Heart left ventricle (tissue), 16 donors: ENCODE measurements at regions of chr12 and their contacts with region 1.

Region 1: DNA sequence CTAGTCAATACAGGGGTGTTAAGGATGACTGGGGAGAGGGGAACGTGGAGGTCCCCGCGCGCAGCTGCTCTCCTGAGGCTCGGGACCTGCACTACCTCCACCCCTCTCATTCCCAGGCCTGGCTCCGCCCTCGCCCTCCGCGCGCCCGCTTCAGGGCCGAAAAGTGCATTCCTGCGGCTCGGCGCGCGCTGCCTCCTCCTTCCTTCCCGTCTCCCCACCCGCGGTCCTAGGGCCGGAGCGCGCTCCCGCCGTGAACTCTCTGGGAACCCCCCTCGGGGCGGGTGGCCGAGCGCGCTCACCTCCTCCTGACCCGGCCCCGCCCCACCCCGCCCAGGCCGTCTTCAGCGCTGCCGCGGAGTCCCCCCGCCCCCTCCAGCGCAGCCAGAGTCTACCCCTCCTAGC is 11.2 kb downstream of the RARG start:
- DNase-seq: peak; percentile 91 to 96 (median 95)
- ATAC-seq: peak; percentile 85 to 92 (median 88)
- H3K4me3 ChIP-seq: peak overlapping the region; percentile 57 to 95 (median 74)
- H3K27ac ChIP-seq: peak overlapping the region; percentile 96 to 100 (median 100)
- H3K4me1 ChIP-seq: peaks cover 6 to 83% (median 57%) of the 10 kb centered on the region in 12 donors
- H3K27me3 ChIP-seq: no peaks in the 10 kb centered on the region
- CTCF ChIP-seq: no peak
- POLR2A ChIP-seq: no peak

Region 2: DNA sequence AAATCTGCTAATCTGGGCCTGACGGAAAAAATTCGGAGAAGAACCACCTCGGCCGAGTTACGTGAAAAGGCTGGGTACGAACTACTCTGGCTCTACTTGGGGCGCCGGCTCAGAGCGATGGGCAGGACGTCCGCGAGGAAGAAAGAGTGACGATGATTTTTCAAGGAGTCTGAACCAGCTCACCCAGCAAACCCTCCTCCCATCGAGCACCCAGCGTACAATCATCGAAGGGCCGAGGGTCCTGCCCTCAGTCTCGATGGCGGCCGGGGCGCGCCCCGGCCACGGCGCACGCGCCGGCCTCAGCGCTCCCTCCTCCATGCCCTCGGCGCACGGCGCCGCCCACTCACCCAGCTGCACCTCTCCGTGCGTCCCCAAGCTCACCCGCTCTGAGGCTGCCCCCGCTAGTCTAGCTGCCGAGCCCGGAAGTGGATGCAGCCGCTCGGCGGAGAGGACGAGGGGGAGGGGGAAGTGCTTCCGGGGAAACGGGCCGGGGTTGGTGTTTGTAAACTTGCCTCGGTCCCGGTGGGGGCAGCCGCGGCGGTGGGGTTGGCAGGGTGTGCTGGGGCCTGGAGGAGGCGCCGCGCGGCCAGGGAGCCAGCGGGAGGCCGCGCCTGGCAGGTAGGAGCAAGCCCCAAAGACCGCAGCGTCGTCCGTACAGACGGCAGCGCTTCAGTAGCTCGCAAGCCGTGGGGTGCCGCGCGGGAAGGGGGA is 40.4 kb before region 1 on chr12 and contains the starts of genes CSAD and ZNF740:
- intact Hi-C with region 1: loop called in 1 of 10 experiments (anchors 2 kb)
- DNase-seq: peak; percentile 98 to 99 (median 99)
- ATAC-seq: peak; percentile 99
- H3K4me3 ChIP-seq: peak within 1 kb of the TSS; percentile 61 to 92 (median 78)
- H3K27ac ChIP-seq: peak within 1 kb of the TSS; percentile 86 to 98 (median 94)
- H3K4me1 ChIP-seq: peaks cover 13 to 49% (median 35%) of the 10 kb centered on the region in 12 donors
- H3K27me3 ChIP-seq: no peaks in the 10 kb centered on the region
- CTCF ChIP-seq: no peak
- POLR2A ChIP-seq: peak; percentile 32 to 86
- total RNA-seq, gene CSAD: 4.3 to 14.8 (median 8.2) TPM
- total RNA-seq, gene ZNF740: 4.8 to 27.4 (median 18.7) TPM

Region 3: GRCh38 chr12:53251477-53252348 is 30.9 kb after region 1 on chr12:
- intact Hi-C with region 1: loop called in 8 of 10 experiments (anchors 1 to 2 kb)
- DNase-seq: peak; percentile 81 to 90 (median 84)
- ATAC-seq: peak; percentile 83 to 95 (median 92)
- H3K4me3 ChIP-seq: peak overlapping the region; percentile 58 to 97 (median 82)
- H3K27ac ChIP-seq: peak overlapping the region; percentile 66 to 97 (median 94)
- H3K4me1 ChIP-seq: peaks cover 0 to 39% (median 24%) of the 10 kb centered on the region in 12 donors
- H3K27me3 ChIP-seq: no peaks in the 10 kb centered on the region
- CTCF ChIP-seq: peak in 11 of 12 donors; percentile 5 to 64 (median 31)
- POLR2A ChIP-seq: peak in 1 of 2 donors; percentile 49

Region 4: GRCh38 chr12:53267999-53268647 is 47.3 kb after region 1 on chr12 and contains the start of gene ESPL1:
- intact Hi-C with region 1: loop called in 1 of 10 experiments (anchors 5 kb)
- DNase-seq: peak; percentile 65 to 85 (median 74)
- ATAC-seq: peak; percentile 83 to 94 (median 92)
- H3K4me3 ChIP-seq: peak within 1 kb of the TSS; percentile 33 to 80 (median 67)
- H3K27ac ChIP-seq: peak within 1 kb of the TSS in 8 of 12 donors; percentile 3 to 79 (median 38)
- H3K4me1 ChIP-seq: peaks cover 0 to 23% (median 4%) of the 10 kb centered on the region in 12 donors
- H3K27me3 ChIP-seq: no peaks in the 10 kb centered on the region
- CTCF ChIP-seq: peak in 6 of 12 donors; percentile 12 to 53 (median 34)
- POLR2A ChIP-seq: peak in 1 of 2 donors; percentile 10
- total RNA-seq, gene ESPL1: 0.06 to 6.1 (median 0.43) TPM

Region 5: GRCh38 chr12:54300732-54301427 is 1080.1 kb after region 1 on chr12 and contains the start of gene NFE2:
- intact Hi-C with region 1: no loop called
- DNase-seq: peak in 4 of 5 donors; percentile 39 to 72 (median 56)
- ATAC-seq: peak; percentile 50 to 68 (median 62)
- H3K4me3 ChIP-seq: peak within 1 kb of the TSS in 8 of 12 donors; percentile 22 to 49 (median 34)
- H3K27ac ChIP-seq: peak within 1 kb of the TSS in 1 of 12 donors; percentile 27
- H3K4me1 ChIP-seq: peaks cover 0 to 53% (median 5%) of the 10 kb centered on the region in 12 donors
- H3K27me3 ChIP-seq: peaks cover 0 to 35% (median 9%) of the 10 kb centered on the region in 9 donors
- CTCF ChIP-seq: no peak
- POLR2A ChIP-seq: no peak
- total RNA-seq, gene NFE2: 0.21 to 1.7 (median 0.63) TPM in 7 of 9 donors, not detected in the others